AG04450 (cell line): ENCODE measurements at regions of chr6 and their contacts with region 1.

Region 1: DNA sequence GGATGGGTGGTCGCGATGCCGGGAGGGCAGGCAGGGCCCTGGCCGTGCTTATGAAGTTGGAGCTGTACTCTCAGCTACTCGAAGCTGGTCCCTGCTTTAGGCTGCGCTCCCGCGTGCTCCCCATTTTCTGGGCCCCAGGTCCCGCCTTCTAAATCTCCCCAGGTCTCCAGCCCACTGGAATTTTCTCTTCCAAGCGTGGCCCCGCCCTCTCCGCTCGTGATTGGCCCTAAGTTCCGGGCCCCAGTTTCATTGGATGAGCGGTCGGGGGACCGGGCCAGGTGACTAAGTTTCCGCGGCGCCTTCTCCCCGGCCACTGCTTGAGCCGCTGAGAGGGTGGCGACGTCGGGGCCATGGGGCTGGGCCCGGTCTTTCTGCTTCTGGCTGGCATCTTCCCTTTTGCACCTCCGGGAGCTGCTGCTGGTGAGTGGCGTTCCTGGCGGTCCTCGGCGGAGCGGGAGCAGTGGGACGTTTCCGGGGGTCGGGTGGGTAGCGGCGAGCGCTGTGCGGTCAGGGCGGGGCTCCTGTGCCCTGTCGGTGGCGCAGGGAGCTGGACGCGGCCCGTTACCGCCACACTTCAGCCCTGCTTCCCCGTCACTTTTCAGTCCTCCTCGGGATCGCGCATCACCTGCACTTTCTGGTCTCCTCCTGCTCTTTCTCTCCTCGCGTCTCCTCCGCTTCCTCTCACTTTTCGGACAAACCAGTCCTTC is at the start of gene MICA:
- DNase-seq: peak; percentile 34
- H3K4me3 ChIP-seq: peak within 1 kb of the TSS; percentile 90
- H3K27ac ChIP-seq: peak within 1 kb of the TSS; percentile 21
- H3K27me3 ChIP-seq: no peaks in the 10 kb centered on the region
- CTCF ChIP-seq: no peak
- polyA plus RNA-seq, gene MICA: 39.9 and 48.5 TPM in 2 replicates

Region 2: DNA sequence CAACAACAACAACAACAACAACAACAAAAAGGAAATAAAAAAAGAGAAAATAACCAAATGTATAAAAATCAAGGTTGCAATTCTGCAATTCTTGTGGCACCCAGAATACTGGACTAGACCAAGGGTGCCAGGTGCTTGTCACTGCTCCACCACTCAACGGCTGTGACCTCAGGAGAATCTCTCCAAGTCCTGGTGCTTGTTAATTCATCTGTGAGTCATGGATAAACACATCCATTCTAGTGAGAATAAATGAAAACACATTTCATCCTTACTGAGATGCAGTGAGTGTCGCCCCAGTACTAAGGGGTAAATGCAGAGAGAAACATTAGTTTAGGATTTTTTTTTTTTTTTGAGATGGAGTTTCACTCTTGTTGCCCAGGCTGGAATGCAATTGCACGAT is 163.6 kb before region 1 on chr6:
- CTCF ChIA-PET with region 1: no interaction called
- POLR2A ChIA-PET with region 1: no interaction called
- DNase-seq: no peak
- H3K4me3 ChIP-seq: no peak overlapping the region
- H3K27ac ChIP-seq: no peak overlapping the region
- H3K27me3 ChIP-seq: peaks cover 21% of the 10 kb centered on the region
- CTCF ChIP-seq: no peak

Region 3: DNA sequence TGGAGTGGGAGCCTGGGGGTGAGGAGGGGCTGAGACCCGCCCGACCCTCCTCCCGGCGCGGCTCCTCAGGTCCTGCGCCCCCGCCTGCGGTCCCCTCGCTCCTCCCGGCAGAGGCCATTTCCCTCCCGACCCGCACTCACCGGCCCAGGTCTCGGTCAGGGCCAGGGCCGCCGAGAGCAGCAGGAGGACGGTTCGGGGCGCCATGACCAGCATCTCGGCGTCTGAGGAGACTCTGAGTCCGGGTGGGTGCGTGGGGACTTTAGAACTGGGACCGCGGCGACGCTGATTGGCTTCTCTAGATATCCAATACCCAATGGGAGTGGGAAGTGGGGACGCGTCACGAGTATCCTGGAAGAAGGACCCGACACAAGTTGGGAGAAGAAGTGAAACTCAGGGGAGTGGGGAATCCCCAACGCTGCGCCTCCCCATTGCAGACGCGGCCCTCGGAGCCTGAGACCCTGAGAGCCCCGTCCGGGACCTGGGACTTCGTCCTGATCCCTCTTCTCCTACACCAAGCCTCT is 46.4 kb before region 1 on chr6 and contains the start of gene HLA-B:
- CTCF ChIA-PET with region 1: no interaction called
- POLR2A ChIA-PET with region 1: no interaction called
- DNase-seq: peak; percentile 47
- H3K4me3 ChIP-seq: peak within 1 kb of the TSS; percentile 70
- H3K27ac ChIP-seq: no peak within 1 kb of the TSS
- H3K27me3 ChIP-seq: peaks cover 18% of the 10 kb centered on the region
- CTCF ChIP-seq: no peak
- polyA plus RNA-seq, gene HLA-B: 418 and 513 TPM in 2 replicates

Region 4: DNA sequence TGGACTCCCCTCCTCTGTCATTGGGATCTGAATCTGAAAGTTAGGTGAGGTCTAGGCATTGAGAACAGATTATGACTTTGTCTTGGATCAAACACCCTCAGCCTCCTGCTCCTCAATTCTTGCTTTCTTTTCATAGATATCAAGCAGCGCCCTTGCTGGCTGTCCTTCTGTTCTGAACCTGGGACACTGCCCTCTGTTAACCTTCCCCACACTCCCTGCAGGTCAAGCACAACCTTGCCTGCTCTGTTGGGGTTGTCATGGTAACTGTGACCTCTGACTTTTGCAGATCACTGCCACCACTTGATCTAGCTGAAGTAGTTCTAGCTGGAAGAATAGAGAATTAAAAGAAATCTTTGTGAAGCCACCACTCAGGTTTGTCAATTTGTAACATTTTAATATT is 16.5 kb before region 1 on chr6:
- CTCF ChIA-PET with region 1: no interaction called
- POLR2A ChIA-PET with region 1: no interaction called
- DNase-seq: no peak
- H3K4me3 ChIP-seq: no peak overlapping the region
- H3K27ac ChIP-seq: no peak overlapping the region
- H3K27me3 ChIP-seq: peaks cover 10% of the 10 kb centered on the region
- CTCF ChIP-seq: no peak

Region 5: DNA sequence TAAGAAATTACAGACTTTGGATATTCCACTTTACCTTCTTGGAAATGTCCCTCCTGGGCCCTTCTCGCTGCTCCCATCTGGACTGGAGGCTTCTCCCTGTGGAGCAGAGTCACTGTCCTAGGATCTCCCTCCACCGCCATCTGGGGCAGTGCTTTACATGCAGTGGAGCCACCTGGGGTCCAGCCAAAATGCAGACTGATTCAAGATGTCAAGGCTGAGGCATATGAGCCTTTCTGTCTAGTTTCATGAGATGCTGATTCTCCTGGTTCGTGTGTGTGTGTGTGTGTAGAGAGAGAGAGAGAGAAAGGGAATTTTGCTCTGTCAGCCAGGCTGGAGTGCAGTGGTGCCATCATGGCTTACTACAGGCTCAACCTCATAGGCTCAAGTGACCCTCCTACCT is 14.8 kb after region 1 on chr6:
- CTCF ChIA-PET with region 1: no interaction called
- POLR2A ChIA-PET with region 1: no interaction called
- DNase-seq: no peak
- H3K4me3 ChIP-seq: no peak overlapping the region
- H3K27ac ChIP-seq: no peak overlapping the region
- H3K27me3 ChIP-seq: peaks cover 6% of the 10 kb centered on the region
- CTCF ChIP-seq: no peak

Region 6: GRCh38 chr6:31430449-31430848 is 27.0 kb after region 1 on chr6:
- CTCF ChIA-PET with region 1: interaction called, 17 read pairs
- POLR2A ChIA-PET with region 1: no interaction called
- DNase-seq: no peak
- H3K4me3 ChIP-seq: no peak overlapping the region
- H3K27ac ChIP-seq: no peak overlapping the region
- H3K27me3 ChIP-seq: peaks cover 11% of the 10 kb centered on the region
- CTCF ChIP-seq: no peak

Region 7: GRCh38 chr6:31441365-31442267 is 38.2 kb after region 1 on chr6:
- CTCF ChIA-PET with region 1: interaction called, 37 read pairs
- POLR2A ChIA-PET with region 1: no interaction called
- DNase-seq: peak; percentile 27
- H3K4me3 ChIP-seq: peak overlapping the region; percentile 29; the same call in 1 of the 2 replicates
- H3K27ac ChIP-seq: no peak overlapping the region
- H3K27me3 ChIP-seq: peaks cover 25% of the 10 kb centered on the region
- CTCF ChIP-seq: peak; percentile 84

Region 8: GRCh38 chr6:31453259-31453658 is 49.8 kb after region 1 on chr6:
- CTCF ChIA-PET with region 1: interaction called, 11 read pairs
- POLR2A ChIA-PET with region 1: no interaction called
- DNase-seq: no peak
- H3K4me3 ChIP-seq: no peak overlapping the region
- H3K27ac ChIP-seq: no peak overlapping the region
- H3K27me3 ChIP-seq: peaks cover 17% of the 10 kb centered on the region
- CTCF ChIP-seq: no peak